Dorsolateral prefrontal cortex (tissue), 120 donors: ENCODE measurements at regions of chr11 and their contacts with region 1.

Region 1: DNA sequence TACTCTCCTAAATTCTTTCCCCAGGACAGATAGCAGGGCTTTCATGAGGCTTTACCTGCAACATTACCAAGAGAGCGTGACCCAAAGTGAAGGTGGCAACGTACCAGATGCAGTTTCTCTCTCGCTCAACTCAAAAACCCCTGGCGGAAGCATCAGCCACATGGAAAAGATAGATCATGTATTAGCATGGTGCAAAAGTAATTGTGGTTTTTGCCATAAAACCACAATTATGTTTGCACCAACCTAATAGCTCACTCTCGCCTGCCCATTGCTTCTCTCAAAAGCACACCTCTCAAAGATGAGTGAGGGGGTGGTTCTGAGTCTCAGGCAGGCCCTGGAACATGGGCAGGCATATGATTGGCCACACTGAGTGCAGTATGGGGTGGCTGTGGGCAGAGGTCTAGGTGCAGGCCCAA is 7.0 kb downstream of the MS4A6A start:
- DNase-seq: no peak
- H3K4me3 ChIP-seq: no peak overlapping the region
- H3K27ac ChIP-seq: no peak overlapping the region
- H3K27me3 ChIP-seq: peaks cover 0 to 7% (median 0%) of the 10 kb centered on the region in 45 donors
- CTCF ChIP-seq: no peak

Region 2: GRCh38 chr11:60235321-60235720 is 59.5 kb after region 1 on chr11:
- intact Hi-C with region 1: loop called in 1 of 2 experiments (anchors 10 kb)
- DNase-seq: no peak
- H3K4me3 ChIP-seq: no peak overlapping the region
- H3K27ac ChIP-seq: no peak overlapping the region
- H3K27me3 ChIP-seq: peaks cover 0 to 3% (median 0%) of the 10 kb centered on the region in 45 donors
- CTCF ChIP-seq: no peak

Region 3: DNA sequence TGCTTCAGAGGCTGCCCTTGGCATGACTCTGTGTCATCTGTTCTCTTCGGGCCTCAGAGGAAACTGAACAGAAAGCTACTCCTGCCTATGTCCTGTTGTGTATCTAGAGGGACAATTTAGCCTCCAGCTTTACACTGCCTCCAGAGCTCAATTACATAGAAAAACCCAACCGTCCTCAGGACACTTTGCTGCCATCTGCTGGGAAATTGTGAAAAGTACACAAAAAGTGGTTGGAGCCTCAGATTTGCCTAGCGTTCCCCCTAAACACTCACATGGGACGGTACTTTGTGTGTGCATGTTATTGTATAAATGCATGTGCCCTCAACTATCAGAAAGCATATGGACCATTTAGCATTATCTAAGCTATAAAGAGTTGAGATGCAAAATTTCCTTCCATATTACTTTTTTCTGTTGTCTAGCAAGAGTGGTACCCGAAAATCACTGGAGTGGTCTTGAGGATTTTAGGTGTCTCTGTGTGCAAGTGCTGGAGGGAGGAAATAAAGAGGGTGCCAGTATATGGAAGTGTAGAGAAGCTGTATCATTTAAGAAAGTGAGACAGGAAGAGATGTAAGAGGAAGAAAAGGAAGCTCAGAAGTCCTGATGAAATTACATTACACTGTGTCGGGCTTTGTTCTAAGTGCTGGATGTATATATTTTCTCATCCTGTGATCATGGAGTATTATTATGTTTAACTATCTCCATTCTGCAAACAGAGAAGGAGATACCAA is 75.8 kb after region 1 on chr11:
- intact Hi-C with region 1: loop called in 1 of 2 experiments (anchors 10 kb)
- DNase-seq: no peak
- H3K4me3 ChIP-seq: no peak overlapping the region
- H3K27ac ChIP-seq: no peak overlapping the region
- H3K27me3 ChIP-seq: peaks cover 0 to 8% (median 0%) of the 10 kb centered on the region in 45 donors
- CTCF ChIP-seq: peak in 40 of 56 donors; percentile 10 to 77 (median 49)